ENCODE measurements at regions of chr5 and their contacts with region 1.

Region 1: GRCh38 chr5:86968301-86968753 is 299.4 kb upstream of the RASA1 start:
- DNase-seq: peak in 4 of 10 donors; percentile 9 to 45 (median 34)
- H3K4me3 ChIP-seq: peak overlapping the region in 34 of 59 donors; percentile 0 to 53 (median 24)
- H3K27ac ChIP-seq: peak overlapping the region in 4 of 59 donors; percentile 14 to 65 (median 22)
- H3K27me3 ChIP-seq: no peaks in the 10 kb centered on the region
- CTCF ChIP-seq: peak; percentile 42 to 88 (median 68)

Region 2: GRCh38 chr5:87015901-87016300 is 47.6 kb after region 1 on chr5:
- intact Hi-C with region 1: loop called in 1 of 2 experiments (anchors 5 kb)
- DNase-seq: no peak
- H3K4me3 ChIP-seq: no peak overlapping the region
- H3K27ac ChIP-seq: peak overlapping the region in 1 of 59 donors; percentile 26
- H3K27me3 ChIP-seq: no peaks in the 10 kb centered on the region
- CTCF ChIP-seq: no peak

Measured in dorsolateral prefrontal cortex (tissue), 120 donors.